HEK293T (cell line): ENCODE measurements at regions of chr13 and their contacts with region 1.

Region 1: GRCh38 chr13:99269627-99270241 is 11.6 kb upstream of the GPR18 start:
- DNase-seq: no peak

Region 2: GRCh38 chr13:99176309-99177276 is 93.1 kb before region 1 on chr13:
- CTCF ChIA-PET with region 1: interaction called, 29 read pairs
- POLR2A ChIA-PET with region 1: no interaction called
- DNase-seq: peak; percentile 79

Region 3: DNA sequence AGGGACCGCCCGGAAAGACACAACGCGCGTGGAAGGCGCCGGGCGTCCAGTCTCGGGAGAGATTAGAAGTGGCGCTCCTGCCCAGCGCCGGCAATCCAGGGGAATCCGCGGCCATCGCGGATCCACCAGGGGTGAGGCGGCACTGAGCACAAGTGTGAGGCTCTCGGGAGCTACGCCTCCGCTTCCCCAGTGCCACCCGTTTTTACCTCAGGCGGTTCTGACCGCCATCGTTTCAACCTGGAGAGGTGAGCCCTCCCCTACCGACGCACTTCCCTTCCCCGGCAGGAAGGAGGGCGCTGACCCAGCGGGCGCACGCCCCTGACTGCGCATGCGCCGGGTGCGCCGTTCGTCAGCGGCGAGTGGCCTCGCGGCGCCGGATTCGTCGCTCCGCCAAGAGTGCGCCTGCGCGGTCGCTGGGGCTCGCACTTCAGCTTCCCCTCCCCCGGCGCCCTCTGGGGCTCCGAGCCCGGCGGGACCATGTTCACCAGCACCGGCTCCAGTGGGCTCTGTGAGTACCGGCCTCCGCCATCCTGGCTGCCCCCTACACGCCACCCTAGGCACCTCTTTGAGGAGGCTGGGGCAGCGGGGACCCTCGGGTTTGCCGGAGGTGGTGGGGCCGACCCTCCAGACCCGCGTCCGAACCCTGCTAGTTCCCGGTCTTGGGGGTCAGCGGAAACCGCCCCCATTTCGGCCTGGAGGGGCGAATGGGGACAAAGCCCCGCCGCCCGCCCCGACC is 69.1 kb before region 1 on chr13 and contains the start of gene UBAC2:
- CTCF ChIA-PET with region 1: interaction called, 3 read pairs
- POLR2A ChIA-PET with region 1: interaction called, 12 read pairs
- DNase-seq: peak; percentile 97

Region 4: DNA sequence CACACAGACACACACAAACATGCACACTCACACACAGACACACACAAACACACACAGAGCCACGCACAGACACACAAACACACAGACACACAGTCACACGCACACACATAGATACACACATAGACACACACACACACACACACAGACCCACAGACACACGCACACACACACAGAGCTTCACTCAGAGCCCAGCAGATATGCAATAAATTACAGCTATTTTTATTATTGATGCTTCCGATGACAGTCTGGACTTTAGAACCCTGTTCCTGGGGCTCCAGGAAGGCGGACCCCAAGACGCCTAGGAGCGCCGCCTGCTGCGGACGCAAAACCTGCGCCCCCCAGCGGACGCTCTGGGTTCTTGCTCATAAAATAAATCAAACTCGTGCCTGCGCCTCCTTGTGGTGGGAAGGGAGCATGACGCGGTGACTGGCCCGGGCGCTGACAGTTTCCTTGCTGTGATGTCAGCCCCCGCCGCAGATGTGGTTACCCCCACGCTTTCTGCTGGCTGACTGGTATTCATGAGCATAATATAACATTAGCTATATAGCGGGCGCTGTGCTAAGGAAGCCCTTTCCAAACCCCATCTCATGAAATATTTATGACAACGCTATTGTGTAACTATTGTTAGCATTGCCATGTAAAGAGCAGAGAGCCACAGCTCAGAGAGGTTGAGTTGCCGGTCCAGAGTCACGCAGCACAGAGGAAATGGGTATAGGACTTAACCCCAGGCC is 167.1 kb after region 1 on chr13:
- CTCF ChIA-PET with region 1: interaction called, 15 read pairs
- POLR2A ChIA-PET with region 1: no interaction called
- DNase-seq: peak; percentile 82